Activated CD4-positive, alpha-beta memory T cell treated with anti-CD3 and anti-CD28 coated beads for 36 hours (primary cell): ENCODE measurements at regions of chr2 and their contacts with region 1.

Region 1: GRCh38 chr2:201144101-201145051 is 28.4 kb downstream of the CFLAR start:
- DNase-seq: no peak
- H3K4me3 Mint-ChIP-seq: no peak overlapping the region
- H3K27ac Mint-ChIP-seq: peak overlapping the region; percentile 49
- H3K4me1 Mint-ChIP-seq: peaks cover 38% of the 10 kb centered on the region
- H3K27me3 Mint-ChIP-seq: no peaks in the 10 kb centered on the region

Region 2: DNA sequence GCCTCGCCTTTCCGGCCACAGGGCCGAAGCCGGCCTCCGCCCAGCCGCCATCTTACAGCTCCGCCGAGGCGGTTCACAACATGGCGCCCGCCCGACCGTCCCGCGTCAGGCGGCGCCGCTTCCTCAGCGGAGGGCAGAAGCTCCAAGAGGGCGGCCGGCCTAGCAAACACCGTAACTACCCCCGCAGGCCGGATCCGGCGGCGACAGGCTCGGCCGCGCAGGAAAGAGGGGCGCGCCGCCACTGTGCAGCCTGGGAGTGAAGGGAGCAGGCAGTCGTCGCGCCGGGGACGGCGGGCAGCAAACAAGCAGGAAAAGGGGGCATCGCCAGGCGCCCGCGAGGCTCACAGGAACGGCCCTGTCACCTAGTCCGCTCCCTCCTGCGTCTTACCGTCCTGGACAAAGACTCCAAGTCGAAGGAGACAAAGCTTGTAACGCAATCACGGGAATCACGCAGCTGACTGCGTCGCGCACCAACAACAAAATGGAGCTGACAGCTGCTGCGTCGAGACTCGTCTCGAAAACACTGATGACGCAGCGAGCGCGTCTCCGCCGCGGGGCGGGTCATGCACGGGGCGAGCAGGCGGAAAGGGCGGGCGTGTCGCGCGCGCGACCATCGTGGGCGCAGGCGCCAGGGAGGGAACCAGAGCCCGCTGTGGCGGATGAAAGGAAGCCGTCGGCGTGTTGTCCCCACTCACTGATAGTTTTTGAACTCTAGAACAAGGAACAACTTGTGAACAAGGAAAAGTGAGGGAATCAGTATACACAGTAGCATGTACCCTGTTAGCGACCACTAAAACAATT is 280.0 kb before region 1 on chr2 and contains the start of gene CLK1:
- CTCF ChIA-PET with region 1: no interaction called
- POLR2A ChIA-PET with region 1: no interaction called
- intact Hi-C with region 1: no loop called
- DNase-seq: peak; percentile 98
- H3K4me3 Mint-ChIP-seq: peak within 1 kb of the TSS; percentile 87
- H3K27ac Mint-ChIP-seq: peak within 1 kb of the TSS; percentile 100
- H3K4me1 Mint-ChIP-seq: peaks cover 36% of the 10 kb centered on the region
- H3K27me3 Mint-ChIP-seq: no peaks in the 10 kb centered on the region
- total RNA-seq, gene CLK1: 112 to 114 TPM

Region 3: DNA sequence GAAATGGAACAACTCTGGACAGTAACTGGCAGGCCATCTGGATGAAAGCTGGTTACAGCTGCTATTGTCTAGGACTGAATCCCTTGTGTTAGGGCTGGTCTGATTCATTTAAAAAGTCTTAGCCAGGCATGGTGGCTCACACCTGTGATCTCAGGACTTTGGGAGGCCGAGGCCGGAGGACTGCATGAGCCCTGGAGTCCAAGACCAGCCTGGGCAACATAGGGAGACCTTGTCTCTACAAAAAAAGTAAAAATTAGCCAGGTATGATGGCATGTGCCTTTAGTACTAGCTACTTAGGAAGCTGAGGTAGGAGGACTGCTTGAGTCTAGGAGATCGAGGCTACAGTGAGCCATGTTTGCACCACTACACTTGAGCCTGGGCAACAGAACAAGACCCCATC is 43.9 kb before region 1 on chr2:
- CTCF ChIA-PET with region 1: no interaction called
- POLR2A ChIA-PET with region 1: no interaction called
- intact Hi-C with region 1: no loop called
- DNase-seq: no peak
- H3K4me3 Mint-ChIP-seq: no peak overlapping the region
- H3K27ac Mint-ChIP-seq: no peak overlapping the region
- H3K4me1 Mint-ChIP-seq: no peaks in the 10 kb centered on the region
- H3K27me3 Mint-ChIP-seq: no peaks in the 10 kb centered on the region

Region 4: GRCh38 chr2:201158111-201158929 is 13.9 kb after region 1 on chr2:
- CTCF ChIA-PET with region 1: interaction called, 13 read pairs
- POLR2A ChIA-PET with region 1: interaction called, 3 read pairs
- intact Hi-C with region 1: no loop called
- DNase-seq: peak; percentile 50
- H3K4me3 Mint-ChIP-seq: no peak overlapping the region
- H3K27ac Mint-ChIP-seq: peak overlapping the region; percentile 75
- H3K4me1 Mint-ChIP-seq: peaks cover 26% of the 10 kb centered on the region
- H3K27me3 Mint-ChIP-seq: no peaks in the 10 kb centered on the region